Mammary epithelial cell (primary cell): ENCODE measurements at regions of chr19 and their contacts with region 1.

Region 1: DNA sequence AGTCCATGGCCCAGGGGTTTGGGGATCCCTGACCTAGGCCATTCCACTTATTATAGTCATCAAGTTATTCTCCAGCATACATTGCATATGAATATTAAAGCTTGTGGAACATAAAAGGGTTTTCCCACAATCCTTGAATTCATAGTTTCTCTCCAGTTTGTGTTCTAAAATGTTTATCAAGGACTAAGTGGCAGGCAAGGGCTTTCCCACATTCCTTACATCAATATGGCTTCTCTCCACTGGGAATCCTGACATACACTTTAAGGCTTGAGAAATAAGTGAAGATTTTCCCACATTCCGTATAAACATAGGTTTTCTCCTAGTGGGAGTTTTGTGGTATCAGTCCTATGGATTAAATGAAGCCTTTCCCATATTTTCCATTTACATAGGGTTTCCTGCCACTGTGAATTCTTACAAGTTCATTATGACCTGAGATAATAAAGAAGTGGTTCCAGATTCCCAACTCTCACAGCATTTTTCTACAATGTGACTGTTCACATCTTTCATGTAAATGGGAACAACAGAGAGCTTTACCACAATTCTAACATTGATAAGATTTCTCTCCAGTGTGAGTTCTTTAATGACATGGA is 14.5 kb downstream of the ZNF426 start:
- DNase-seq: no peak
- H3K4me3 ChIP-seq: no peak overlapping the region
- H3K27ac ChIP-seq: no peak overlapping the region
- H3K4me1 ChIP-seq: no peaks in the 10 kb centered on the region
- H3K27me3 ChIP-seq: no peaks in the 10 kb centered on the region
- CTCF ChIP-seq: no peak

Region 2: GRCh38 chr19:9323919-9324583 is 199.9 kb before region 1 on chr19 and contains the start of gene ZNF559:
- CTCF ChIA-PET with region 1: no interaction called
- dilution Hi-C with region 1: no loop called
- in situ Hi-C with region 1: no loop called
- intact Hi-C with region 1: loop called (anchors 10 kb)
- DNase-seq: peak; percentile 94
- H3K4me3 ChIP-seq: peak within 1 kb of the TSS; percentile 67 to 82 (median 72)
- H3K27ac ChIP-seq: peak within 1 kb of the TSS; percentile 38
- H3K4me1 ChIP-seq: no peaks in the 10 kb centered on the region
- H3K27me3 ChIP-seq: no peaks in the 10 kb centered on the region
- CTCF ChIP-seq: peak in 1 of 2 donors; percentile 33
- total RNA-seq, gene ZNF559: 7.6 to 12.8 TPM

Region 3: GRCh38 chr19:9456018-9456689 is 67.8 kb before region 1 on chr19:
- CTCF ChIA-PET with region 1: no interaction called
- dilution Hi-C with region 1: loop called (anchors 5 kb)
- in situ Hi-C with region 1: no loop called
- intact Hi-C with region 1: no loop called
- DNase-seq: no peak
- H3K4me3 ChIP-seq: no peak overlapping the region
- H3K27ac ChIP-seq: no peak overlapping the region
- H3K4me1 ChIP-seq: no peaks in the 10 kb centered on the region
- H3K27me3 ChIP-seq: no peaks in the 10 kb centered on the region
- CTCF ChIP-seq: no peak